MCF 10A (cell line): ENCODE measurements at regions of chr5 and their contacts with region 1.

Region 1: GRCh38 chr5:8756498-8757084 is 789.3 kb downstream of the SEMA5A start:
- DNase-seq: peak; percentile 55
- H3K4me3 Mint-ChIP-seq: no peak overlapping the region
- H3K27ac Mint-ChIP-seq: no peak overlapping the region
- H3K4me1 Mint-ChIP-seq: no peaks in the 10 kb centered on the region
- H3K27me3 Mint-ChIP-seq: no peaks in the 10 kb centered on the region
- CTCF ChIP-seq: peak; percentile 64

Region 2: GRCh38 chr5:7927466-7928375 is 828.9 kb before region 1 on chr5:
- CTCF ChIA-PET with region 1: interaction called, 6 read pairs
- POLR2A ChIA-PET with region 1: no interaction called
- intact Hi-C with region 1: loop called (anchors 2 kb)
- DNase-seq: peak; percentile 65
- H3K4me3 Mint-ChIP-seq: no peak overlapping the region
- H3K27ac Mint-ChIP-seq: no peak overlapping the region
- H3K4me1 Mint-ChIP-seq: no peaks in the 10 kb centered on the region
- H3K27me3 Mint-ChIP-seq: peaks cover 10% of the 10 kb centered on the region
- CTCF ChIP-seq: peak; percentile 63

Region 3: DNA sequence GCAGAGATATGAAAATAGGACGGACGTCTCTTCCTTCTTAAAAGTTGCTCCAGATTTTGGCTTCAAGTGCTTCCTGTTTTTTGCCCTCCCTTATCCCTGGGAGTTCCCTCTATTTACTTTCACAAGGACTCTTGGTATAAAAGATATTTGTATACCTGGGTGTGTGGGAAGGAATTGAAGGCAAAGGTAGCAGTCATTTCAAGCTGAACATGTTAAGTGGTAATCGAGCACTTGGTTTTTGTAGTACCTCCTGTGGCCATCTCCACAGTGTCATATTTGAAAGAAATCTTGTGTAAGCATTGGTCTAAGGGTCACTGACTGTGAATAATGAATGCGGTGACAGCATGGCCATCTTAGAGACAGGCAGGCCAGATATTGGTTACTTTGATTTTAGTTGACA is 294.0 kb before region 1 on chr5:
- CTCF ChIA-PET with region 1: no interaction called
- POLR2A ChIA-PET with region 1: no interaction called
- intact Hi-C with region 1: no loop called
- DNase-seq: no peak
- H3K4me3 Mint-ChIP-seq: no peak overlapping the region
- H3K27ac Mint-ChIP-seq: no peak overlapping the region
- H3K4me1 Mint-ChIP-seq: peaks cover 9% of the 10 kb centered on the region
- H3K27me3 Mint-ChIP-seq: no peaks in the 10 kb centered on the region
- CTCF ChIP-seq: no peak

Region 4: DNA sequence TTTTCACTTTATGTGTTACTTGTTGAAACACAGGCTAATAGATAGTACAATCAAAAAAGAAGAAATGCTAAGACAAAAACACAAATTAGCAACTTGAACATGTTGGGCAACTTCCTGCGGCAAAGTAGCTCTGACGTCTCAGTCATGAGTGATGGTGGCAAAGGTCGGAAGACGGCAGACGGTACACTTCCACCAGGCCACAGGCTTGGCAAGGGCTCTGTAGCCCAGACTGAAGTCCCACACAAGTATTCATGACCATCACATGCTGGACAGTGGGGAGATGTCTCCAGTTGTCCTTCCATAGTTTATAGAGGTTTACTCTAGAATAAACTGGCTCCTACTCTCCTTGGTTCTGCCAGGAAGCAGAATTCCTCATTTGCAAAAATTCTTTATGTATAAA is 56.4 kb before region 1 on chr5:
- CTCF ChIA-PET with region 1: no interaction called
- POLR2A ChIA-PET with region 1: no interaction called
- intact Hi-C with region 1: no loop called
- DNase-seq: no peak
- H3K4me3 Mint-ChIP-seq: no peak overlapping the region
- H3K27ac Mint-ChIP-seq: no peak overlapping the region
- H3K4me1 Mint-ChIP-seq: peaks cover 6% of the 10 kb centered on the region
- H3K27me3 Mint-ChIP-seq: no peaks in the 10 kb centered on the region
- CTCF ChIP-seq: no peak

Region 5: GRCh38 chr5:8767746-8768145 is 11.2 kb after region 1 on chr5:
- CTCF ChIA-PET with region 1: interaction called, 18 read pairs
- POLR2A ChIA-PET with region 1: no interaction called
- intact Hi-C with region 1: no loop called
- DNase-seq: no peak
- H3K4me3 Mint-ChIP-seq: no peak overlapping the region
- H3K27ac Mint-ChIP-seq: no peak overlapping the region
- H3K4me1 Mint-ChIP-seq: no peaks in the 10 kb centered on the region
- H3K27me3 Mint-ChIP-seq: no peaks in the 10 kb centered on the region
- CTCF ChIP-seq: no peak

Region 6: DNA sequence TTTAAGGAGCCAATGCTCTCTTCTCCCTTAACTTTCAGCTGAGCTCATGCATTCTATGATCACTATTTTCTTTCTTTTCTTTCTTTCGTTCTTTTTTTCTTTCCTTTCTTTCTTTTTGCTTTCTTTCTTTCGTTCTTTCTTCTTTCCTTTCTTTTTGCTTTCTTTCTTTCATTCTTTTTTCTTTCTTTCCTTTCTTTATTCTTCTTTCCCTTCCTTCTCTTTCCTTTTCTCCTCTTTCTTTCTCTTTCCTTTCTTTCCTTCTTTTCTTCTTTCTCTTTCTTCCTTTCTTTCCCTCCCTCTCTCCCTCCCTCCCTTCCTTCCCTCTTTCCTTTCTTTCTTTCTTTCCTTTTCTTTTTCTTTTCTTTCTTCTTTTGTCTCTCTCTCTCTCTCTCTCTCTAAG is 28.1 kb after region 1 on chr5:
- CTCF ChIA-PET with region 1: no interaction called
- POLR2A ChIA-PET with region 1: no interaction called
- intact Hi-C with region 1: no loop called
- DNase-seq: no peak
- H3K4me3 Mint-ChIP-seq: no peak overlapping the region
- H3K27ac Mint-ChIP-seq: no peak overlapping the region
- H3K4me1 Mint-ChIP-seq: peaks cover 8% of the 10 kb centered on the region
- H3K27me3 Mint-ChIP-seq: no peaks in the 10 kb centered on the region
- CTCF ChIP-seq: no peak

Region 7: DNA sequence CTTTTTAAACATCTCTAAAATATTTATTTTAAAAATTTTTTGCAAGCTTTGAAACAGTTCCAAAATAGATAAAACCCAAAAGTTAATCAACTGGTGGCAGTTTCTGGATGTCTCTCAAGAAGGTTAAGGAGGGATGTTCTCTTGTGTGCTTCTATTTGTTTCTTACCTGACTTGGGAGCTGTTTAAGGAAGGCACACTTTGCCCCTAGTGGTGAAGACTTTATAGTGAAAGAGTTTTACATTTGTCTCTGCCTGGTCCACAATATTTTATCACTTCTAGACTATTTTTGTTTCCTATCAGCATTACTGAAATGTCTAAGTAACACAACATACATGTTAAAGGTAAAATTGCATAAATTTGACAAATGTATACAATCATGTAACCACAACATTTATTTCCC is 236.4 kb after region 1 on chr5:
- CTCF ChIA-PET with region 1: no interaction called
- POLR2A ChIA-PET with region 1: no interaction called
- intact Hi-C with region 1: loop called (anchors 10 kb)
- DNase-seq: peak; percentile 33
- H3K4me3 Mint-ChIP-seq: no peak overlapping the region
- H3K27ac Mint-ChIP-seq: no peak overlapping the region
- H3K4me1 Mint-ChIP-seq: peaks cover 6% of the 10 kb centered on the region
- H3K27me3 Mint-ChIP-seq: no peaks in the 10 kb centered on the region
- CTCF ChIP-seq: peak; percentile 37

Region 8: DNA sequence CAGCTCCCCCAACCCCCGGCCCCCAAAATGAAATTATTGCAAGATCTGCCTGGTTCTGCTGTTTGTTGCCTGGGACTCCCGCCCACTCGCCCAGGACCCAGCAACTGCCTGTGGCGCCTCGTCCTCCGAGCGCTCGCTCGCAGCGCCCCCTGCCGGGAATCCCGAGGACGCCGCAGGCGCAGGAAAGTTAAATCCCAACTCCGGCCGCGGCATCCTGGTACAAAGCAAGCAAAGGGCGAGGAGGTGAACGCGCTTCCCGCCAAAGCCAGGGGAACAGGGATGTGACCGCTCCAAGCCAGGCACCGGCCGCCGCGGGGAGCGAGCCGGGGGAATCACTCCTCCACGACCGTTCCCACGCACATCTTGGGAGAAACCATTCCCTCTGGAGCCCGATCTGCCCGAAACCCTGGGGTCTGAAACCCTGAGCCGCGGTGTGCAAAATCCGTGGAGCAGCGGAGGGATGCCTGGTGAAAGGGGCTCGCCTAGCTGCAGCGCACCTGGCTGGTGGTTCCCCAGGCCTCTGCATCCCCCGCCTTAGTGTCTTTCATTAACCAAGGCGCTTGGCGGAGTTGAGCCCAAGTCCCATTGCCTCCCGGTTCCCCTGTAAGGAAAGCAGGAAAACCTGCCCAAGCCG is 788.0 kb after region 1 on chr5:
- CTCF ChIA-PET with region 1: interaction called, 6 read pairs
- POLR2A ChIA-PET with region 1: no interaction called
- intact Hi-C with region 1: loop called (anchors 1 kb)
- DNase-seq: peak; percentile 76
- H3K4me3 Mint-ChIP-seq: peak overlapping the region; percentile 69
- H3K27ac Mint-ChIP-seq: peak overlapping the region; percentile 27
- H3K4me1 Mint-ChIP-seq: peaks cover 7% of the 10 kb centered on the region
- H3K27me3 Mint-ChIP-seq: no peaks in the 10 kb centered on the region
- CTCF ChIP-seq: peak; percentile 93